ENCODE measurements at regions of chr9 and their contacts with region 1.

Region 1: GRCh38 chr9:36407122-36407723 is 7.2 kb upstream of the RNF38 start:
- DNase-seq: peak in 1 of 2 donors; percentile 49
- H3K4me3 ChIP-seq: no peak overlapping the region
- H3K27ac ChIP-seq: peak overlapping the region in 1 of 2 donors; percentile 23
- H3K4me1 ChIP-seq: no peaks in the 10 kb centered on the region
- H3K27me3 ChIP-seq: no peaks in the 10 kb centered on the region
- CTCF ChIP-seq: peak; percentile 88 to 95

Region 2: GRCh38 chr9:36092509-36093215 is 314.6 kb before region 1 on chr9:
- intact Hi-C with region 1: no loop called
- DNase-seq: no peak
- H3K4me3 ChIP-seq: no peak overlapping the region
- H3K27ac ChIP-seq: no peak overlapping the region
- H3K4me1 ChIP-seq: peaks cover 0 to 13% (median 2%) of the 10 kb centered on the region in 4 donors
- H3K27me3 ChIP-seq: no peaks in the 10 kb centered on the region
- CTCF ChIP-seq: no peak

Region 3: GRCh38 chr9:36560857-36561221 is 153.6 kb after region 1 on chr9:
- intact Hi-C with region 1: loop called (anchors 2 kb)
- DNase-seq: no peak
- H3K4me3 ChIP-seq: no peak overlapping the region
- H3K27ac ChIP-seq: no peak overlapping the region
- H3K4me1 ChIP-seq: no peaks in the 10 kb centered on the region
- H3K27me3 ChIP-seq: peaks cover 0 to 2% of the 10 kb centered on the region in 2 donors
- CTCF ChIP-seq: no peak